IMR-90 (cell line): ENCODE measurements at regions of chr2 and their contacts with region 1.

Region 1: DNA sequence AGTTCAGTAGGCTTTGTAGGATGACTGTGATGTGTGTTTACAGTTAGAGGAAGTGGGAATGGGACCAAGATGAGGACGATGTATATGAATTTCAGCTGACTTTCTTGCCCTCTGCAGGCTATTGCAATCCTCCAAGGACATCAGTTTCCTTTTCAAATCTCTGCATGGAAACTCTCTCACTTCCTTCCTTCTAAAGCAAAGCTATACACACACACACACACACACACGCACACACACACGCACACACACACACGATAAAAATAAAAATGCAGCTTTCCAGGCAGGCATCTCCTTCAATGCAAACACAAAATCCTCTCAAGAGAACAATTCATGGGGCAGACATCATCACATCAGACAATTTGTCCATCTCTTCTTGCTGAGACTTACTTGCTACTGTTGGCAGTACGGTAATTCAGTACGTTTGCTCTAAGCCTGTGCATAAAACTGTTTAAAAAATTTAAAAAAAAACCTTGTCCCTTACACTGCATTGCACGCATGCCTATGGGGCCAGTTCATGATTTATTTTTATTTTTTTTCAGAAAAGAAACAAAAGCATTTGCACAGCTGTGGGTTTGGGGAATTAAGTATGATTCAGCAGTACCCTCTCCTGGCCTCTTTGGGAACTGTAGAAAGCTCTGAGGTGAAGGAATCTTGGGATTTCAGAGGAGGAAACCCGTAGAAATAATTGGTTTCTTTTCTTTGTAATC is 27.1 kb upstream of the ICOS start:
- DNase-seq: peak; percentile 80
- ATAC-seq: peak; percentile 94
- H3K4me3 ChIP-seq: peak overlapping the region; percentile 20; the same call in 1 of the 2 replicates
- H3K27ac ChIP-seq: peak overlapping the region; percentile 57; the same call in 1 of the 2 replicates
- H3K4me1 ChIP-seq: peaks cover 3% of the 10 kb centered on the region; the same call in 1 of the 2 replicates
- H3K27me3 ChIP-seq: no peaks in the 10 kb centered on the region; the same call in 1 of the 2 replicates
- CTCF ChIP-seq: peak; percentile 85
- POLR2A ChIP-seq: no peak
- RAD21 ChIP-seq: peak; percentile 85

Region 2: GRCh38 chr2:203225423-203226039 is 683.9 kb before region 1 on chr2:
- CTCF ChIA-PET with region 1: no interaction called
- POLR2A ChIA-PET with region 1: no interaction called
- dilution Hi-C with region 1: no loop called
- in situ Hi-C with region 1: no loop called
- intact Hi-C with region 1: loop called (anchors 1 kb)
- DNase-seq: peak; percentile 21
- ATAC-seq: peak; percentile 71; the same call in 1 of the 2 replicates
- H3K4me3 ChIP-seq: no peak overlapping the region
- H3K27ac ChIP-seq: no peak overlapping the region
- H3K4me1 ChIP-seq: no peaks in the 10 kb centered on the region
- H3K27me3 ChIP-seq: no peaks in the 10 kb centered on the region
- CTCF ChIP-seq: peak; percentile 50
- POLR2A ChIP-seq: no peak
- RAD21 ChIP-seq: peak; percentile 56

Region 3: DNA sequence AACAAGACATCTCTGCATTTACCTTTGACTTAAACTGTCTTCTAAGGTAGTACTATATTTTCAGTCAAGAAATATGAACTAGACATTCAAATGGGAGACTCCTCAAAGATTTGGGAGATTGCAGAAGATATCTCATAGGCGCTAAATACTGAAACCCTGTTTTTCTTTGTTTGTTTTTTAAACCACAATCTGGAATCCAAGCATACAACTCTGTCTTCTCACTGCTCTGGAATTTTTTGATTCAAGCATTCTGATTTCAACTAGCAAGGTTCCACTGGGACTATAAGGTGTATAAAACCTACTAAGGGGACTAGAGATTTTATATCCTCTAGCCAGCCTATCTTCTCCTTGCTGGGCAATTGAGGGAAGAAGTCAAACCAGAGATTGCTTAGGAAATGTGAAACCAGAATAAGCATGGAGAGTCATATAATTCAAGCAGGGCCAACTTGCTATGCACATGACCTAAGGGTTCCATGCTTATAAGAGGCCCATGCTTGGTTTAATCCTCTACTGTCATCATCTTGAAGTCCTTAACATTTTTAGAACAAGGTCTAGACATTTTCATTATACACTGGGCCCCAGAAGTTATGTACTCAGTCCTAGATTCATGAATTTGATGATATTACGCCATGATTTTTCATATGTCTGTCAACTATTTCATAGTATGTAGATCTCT is 1041.4 kb after region 1 on chr2:
- CTCF ChIA-PET with region 1: no interaction called
- POLR2A ChIA-PET with region 1: no interaction called
- dilution Hi-C with region 1: no loop called
- in situ Hi-C with region 1: no loop called
- intact Hi-C with region 1: no loop called
- DNase-seq: peak; percentile 62
- ATAC-seq: peak; percentile 91
- H3K4me3 ChIP-seq: no peak overlapping the region
- H3K27ac ChIP-seq: no peak overlapping the region
- H3K4me1 ChIP-seq: peaks cover 4% of the 10 kb centered on the region
- H3K27me3 ChIP-seq: no peaks in the 10 kb centered on the region
- CTCF ChIP-seq: no peak
- POLR2A ChIP-seq: no peak
- RAD21 ChIP-seq: no peak